MCF 10A (cell line): ENCODE measurements at regions of chr4 and their contacts with region 1.

Region 1: DNA sequence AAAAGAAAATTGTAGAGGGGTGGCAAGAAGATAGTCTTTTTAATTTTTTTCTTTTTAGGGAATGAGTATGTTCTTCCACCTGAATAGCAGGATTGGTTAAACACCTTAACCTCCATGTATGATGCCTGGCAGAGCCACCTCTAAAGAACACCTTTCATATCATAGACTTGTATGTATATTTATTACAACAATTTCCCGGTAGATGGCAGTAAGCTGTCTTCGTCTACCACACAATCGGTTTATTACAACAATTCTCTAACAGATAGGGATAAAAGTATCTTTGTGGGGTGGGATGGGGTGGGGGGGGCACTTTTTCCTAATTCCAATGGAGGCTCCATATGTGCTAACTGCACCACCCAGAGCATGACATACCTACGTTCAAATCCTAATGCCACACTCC is 255.6 kb downstream of the LDB2 start:
- DNase-seq: peak; percentile 32
- H3K4me3 Mint-ChIP-seq: no peak overlapping the region
- H3K27ac Mint-ChIP-seq: no peak overlapping the region
- H3K4me1 Mint-ChIP-seq: peaks cover 7% of the 10 kb centered on the region
- H3K27me3 Mint-ChIP-seq: peaks cover 73% of the 10 kb centered on the region
- CTCF ChIP-seq: peak; percentile 22

Region 2: DNA sequence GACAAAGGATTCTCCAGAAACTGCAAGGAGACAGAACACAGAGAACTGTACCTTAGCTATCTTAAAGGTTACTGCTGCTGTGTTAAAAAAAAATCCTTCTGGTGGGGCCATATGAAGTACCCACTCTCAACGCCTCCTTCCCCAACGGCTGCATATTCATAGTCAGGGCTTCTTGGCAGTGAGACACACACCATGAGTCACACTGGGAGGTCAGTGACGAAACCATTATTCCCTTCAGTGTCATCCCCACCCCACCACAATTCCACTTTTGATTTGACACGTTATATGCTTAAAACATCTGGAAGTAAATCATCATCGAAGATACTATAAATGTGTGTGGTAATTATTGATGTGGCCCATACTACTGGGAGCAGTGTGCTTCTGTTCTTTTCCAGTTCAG is 15.9 kb before region 1 on chr4:
- CTCF ChIA-PET with region 1: interaction called, 20 read pairs
- POLR2A ChIA-PET with region 1: no interaction called
- intact Hi-C with region 1: no loop called
- DNase-seq: peak; percentile 90
- H3K4me3 Mint-ChIP-seq: no peak overlapping the region
- H3K27ac Mint-ChIP-seq: no peak overlapping the region
- H3K4me1 Mint-ChIP-seq: peaks cover 17% of the 10 kb centered on the region
- H3K27me3 Mint-ChIP-seq: no peaks in the 10 kb centered on the region
- CTCF ChIP-seq: no peak

Region 3: DNA sequence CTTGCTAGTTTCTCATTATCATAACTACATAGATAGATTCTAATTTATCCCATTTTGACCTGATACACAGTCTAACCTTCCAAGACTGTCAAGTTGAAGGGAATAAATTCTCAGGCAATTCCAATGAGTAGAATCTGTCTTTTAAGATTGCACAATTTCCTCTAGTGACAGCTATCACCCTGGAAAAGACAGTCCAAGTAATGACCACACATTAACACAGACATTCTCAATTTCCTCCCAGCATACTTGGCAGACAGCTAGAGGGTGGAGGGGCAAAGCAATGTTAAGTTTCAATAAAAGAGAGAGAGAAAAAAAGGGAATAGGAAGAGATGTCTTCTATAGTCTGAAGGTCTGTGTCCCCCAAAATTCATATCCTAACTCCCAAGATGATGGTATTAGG is 20.8 kb after region 1 on chr4:
- CTCF ChIA-PET with region 1: interaction called, 14 read pairs
- POLR2A ChIA-PET with region 1: no interaction called
- intact Hi-C with region 1: no loop called
- DNase-seq: peak; percentile 1
- H3K4me3 Mint-ChIP-seq: no peak overlapping the region
- H3K27ac Mint-ChIP-seq: no peak overlapping the region
- H3K4me1 Mint-ChIP-seq: peaks cover 17% of the 10 kb centered on the region
- H3K27me3 Mint-ChIP-seq: no peaks in the 10 kb centered on the region
- CTCF ChIP-seq: no peak

Region 4: DNA sequence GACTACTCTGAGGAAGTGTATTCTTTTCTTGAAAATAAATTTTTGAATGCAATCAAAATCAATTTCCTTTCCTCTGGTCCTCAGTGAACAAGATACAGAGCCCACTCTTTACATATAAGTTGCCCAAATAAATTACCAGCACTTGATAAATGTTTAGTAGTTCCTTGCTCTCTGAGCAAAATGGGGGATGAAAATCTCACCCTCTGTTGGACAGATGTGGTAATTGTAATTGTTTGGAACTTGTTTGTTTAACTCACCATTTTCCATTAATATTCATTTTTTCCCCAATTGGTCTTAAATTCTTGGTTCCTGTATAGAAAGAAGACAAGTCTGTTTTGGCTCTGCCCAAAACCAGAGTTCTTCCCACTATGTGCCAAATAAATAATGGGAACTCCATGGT is 109.3 kb after region 1 on chr4:
- CTCF ChIA-PET with region 1: interaction called, 7 read pairs
- POLR2A ChIA-PET with region 1: no interaction called
- intact Hi-C with region 1: loop called (anchors 1 kb)
- DNase-seq: peak; percentile 17
- H3K4me3 Mint-ChIP-seq: no peak overlapping the region
- H3K27ac Mint-ChIP-seq: no peak overlapping the region
- H3K4me1 Mint-ChIP-seq: peaks cover 3% of the 10 kb centered on the region
- H3K27me3 Mint-ChIP-seq: peaks cover 45% of the 10 kb centered on the region
- CTCF ChIP-seq: no peak

Region 5: DNA sequence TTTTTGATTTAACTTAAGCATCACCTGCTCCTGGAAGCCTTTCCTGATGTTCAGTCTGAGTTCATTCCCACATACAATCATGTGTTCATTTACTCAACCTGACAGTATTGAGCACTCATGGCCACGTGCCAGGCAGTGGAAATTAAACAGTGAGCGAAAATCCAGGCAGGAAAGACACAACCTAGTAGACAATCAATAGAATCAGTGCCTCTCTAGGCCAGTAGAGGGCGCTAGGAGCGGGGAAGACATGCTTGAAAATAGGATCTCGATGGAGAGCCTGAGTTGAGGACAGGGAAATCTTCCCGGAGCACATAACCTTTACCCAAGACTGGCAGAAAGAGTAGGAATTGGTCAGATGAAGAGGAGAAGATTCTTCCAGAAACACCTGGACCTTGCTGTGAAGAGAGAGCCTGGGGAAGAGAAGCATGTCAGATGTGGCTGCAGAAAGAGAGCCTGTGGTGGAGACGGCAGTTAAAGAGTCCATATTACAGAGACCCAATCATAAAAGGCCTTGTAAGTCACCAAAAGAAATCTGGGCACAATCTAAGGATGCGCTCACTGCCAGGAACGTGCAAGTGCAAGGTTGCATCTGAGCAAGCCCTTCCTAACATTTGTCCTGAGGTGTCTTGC is 152.0 kb after region 1 on chr4:
- CTCF ChIA-PET with region 1: interaction called, 11 read pairs
- POLR2A ChIA-PET with region 1: no interaction called
- intact Hi-C with region 1: no loop called
- DNase-seq: peak; percentile 64
- H3K4me3 Mint-ChIP-seq: no peak overlapping the region
- H3K27ac Mint-ChIP-seq: no peak overlapping the region
- H3K4me1 Mint-ChIP-seq: no peaks in the 10 kb centered on the region
- H3K27me3 Mint-ChIP-seq: peaks cover 23% of the 10 kb centered on the region
- CTCF ChIP-seq: peak; percentile 75

Region 6: GRCh38 chr4:17468371-17469221 is 825.7 kb after region 1 on chr4:
- CTCF ChIA-PET with region 1: interaction called, 6 read pairs
- POLR2A ChIA-PET with region 1: no interaction called
- intact Hi-C with region 1: loop called (anchors 5 kb)
- DNase-seq: peak; percentile 56
- H3K4me3 Mint-ChIP-seq: no peak overlapping the region
- H3K27ac Mint-ChIP-seq: no peak overlapping the region
- H3K4me1 Mint-ChIP-seq: no peaks in the 10 kb centered on the region
- H3K27me3 Mint-ChIP-seq: no peaks in the 10 kb centered on the region
- CTCF ChIP-seq: peak; percentile 50